OCI-LY7 (cell line): ENCODE measurements at regions of chr15 and their contacts with region 1.

Region 1: DNA sequence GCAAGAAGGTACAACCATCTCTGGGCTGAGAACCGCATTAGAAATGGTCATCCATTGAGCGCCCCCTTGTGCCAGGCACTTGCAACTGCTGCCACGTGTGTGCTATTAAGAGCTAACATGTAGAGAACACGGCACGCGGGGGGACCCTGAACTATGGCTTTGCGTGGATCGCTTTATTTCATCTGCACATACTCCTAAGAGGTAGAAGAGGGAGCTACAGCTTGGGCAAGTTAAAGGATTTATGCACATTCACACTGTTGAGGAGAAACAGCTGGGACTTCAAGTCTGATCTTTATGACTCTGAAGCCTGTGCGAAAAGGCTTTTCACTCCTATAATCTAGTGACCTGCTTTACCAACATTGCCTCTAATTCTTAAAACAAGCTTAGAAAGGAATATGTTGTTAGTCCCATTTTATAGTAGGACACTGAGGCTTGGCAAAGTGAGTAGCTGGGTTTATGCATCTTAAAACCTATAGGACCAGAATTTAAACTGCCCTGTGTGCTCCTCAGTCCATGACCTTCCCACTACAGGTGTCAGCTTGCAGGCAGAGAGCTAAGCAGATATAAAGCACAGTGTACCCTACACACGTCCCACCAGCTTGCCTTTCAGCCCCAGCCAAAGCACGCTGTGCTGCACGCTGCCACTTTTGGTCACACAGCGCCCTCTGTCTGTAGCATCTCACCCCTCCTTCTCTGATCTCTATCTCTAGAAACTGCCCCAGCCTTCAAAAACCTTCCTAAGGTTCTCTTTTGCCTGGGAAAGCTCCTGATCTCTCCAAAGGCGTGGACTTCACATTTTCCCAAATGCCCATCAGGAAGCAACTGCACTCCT is 57.8 kb downstream of the STARD5 start:
- DNase-seq: peak; percentile 89
- H3K4me3 ChIP-seq: peak overlapping the region; percentile 27
- H3K27ac ChIP-seq: peak overlapping the region; percentile 37
- H3K4me1 ChIP-seq: peaks cover 21% of the 10 kb centered on the region
- CTCF ChIP-seq: peak; percentile 89

Region 2: GRCh38 chr15:80455668-80456442 is 810.3 kb before region 1 on chr15:
- CTCF ChIA-PET with region 1: interaction called, 3 read pairs
- POLR2A ChIA-PET with region 1: no interaction called
- intact Hi-C with region 1: loop called (anchors 5 kb)
- DNase-seq: peak; percentile 61
- H3K4me3 ChIP-seq: no peak overlapping the region
- H3K27ac ChIP-seq: no peak overlapping the region
- H3K4me1 ChIP-seq: no peaks in the 10 kb centered on the region
- CTCF ChIP-seq: peak; percentile 95

Region 3: DNA sequence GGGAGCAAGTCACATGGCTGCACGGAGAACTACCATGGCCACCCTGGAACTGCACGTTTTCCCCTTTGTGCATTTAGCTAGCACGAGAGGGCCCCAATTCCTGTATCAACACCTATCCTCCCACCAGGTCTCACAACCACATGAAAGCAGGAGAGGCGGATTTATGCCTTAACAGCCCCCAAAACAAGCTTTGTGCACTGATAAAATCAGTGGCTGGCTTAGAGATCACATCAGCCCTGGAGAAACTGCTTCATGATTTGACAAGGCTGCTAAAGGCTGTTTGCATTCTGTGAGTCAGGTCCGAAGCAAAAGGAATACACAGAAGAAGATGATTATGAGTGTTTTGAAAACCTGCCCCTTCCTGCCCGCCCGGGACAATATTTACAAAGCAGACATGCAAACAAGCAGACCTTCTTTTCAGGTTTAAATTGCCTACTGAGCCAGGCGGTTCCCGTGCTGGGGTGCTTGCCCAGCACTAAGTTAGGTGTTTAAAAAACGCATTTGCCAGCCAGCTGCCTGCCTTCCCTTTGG is 461.1 kb before region 1 on chr15:
- CTCF ChIA-PET with region 1: no interaction called
- POLR2A ChIA-PET with region 1: no interaction called
- intact Hi-C with region 1: no loop called
- DNase-seq: no peak
- H3K4me3 ChIP-seq: no peak overlapping the region
- H3K27ac ChIP-seq: no peak overlapping the region
- H3K4me1 ChIP-seq: no peaks in the 10 kb centered on the region
- CTCF ChIP-seq: no peak

Region 4: GRCh38 chr15:80977627-80978036 is 288.5 kb before region 1 on chr15:
- CTCF ChIA-PET with region 1: interaction called, 10 read pairs
- POLR2A ChIA-PET with region 1: interaction called, 5 read pairs
- intact Hi-C with region 1: loop called (anchors 2 kb)
- DNase-seq: peak; percentile 72
- H3K4me3 ChIP-seq: no peak overlapping the region
- H3K27ac ChIP-seq: no peak overlapping the region
- H3K4me1 ChIP-seq: peaks cover 29% of the 10 kb centered on the region
- CTCF ChIP-seq: peak; percentile 89

Region 5: DNA sequence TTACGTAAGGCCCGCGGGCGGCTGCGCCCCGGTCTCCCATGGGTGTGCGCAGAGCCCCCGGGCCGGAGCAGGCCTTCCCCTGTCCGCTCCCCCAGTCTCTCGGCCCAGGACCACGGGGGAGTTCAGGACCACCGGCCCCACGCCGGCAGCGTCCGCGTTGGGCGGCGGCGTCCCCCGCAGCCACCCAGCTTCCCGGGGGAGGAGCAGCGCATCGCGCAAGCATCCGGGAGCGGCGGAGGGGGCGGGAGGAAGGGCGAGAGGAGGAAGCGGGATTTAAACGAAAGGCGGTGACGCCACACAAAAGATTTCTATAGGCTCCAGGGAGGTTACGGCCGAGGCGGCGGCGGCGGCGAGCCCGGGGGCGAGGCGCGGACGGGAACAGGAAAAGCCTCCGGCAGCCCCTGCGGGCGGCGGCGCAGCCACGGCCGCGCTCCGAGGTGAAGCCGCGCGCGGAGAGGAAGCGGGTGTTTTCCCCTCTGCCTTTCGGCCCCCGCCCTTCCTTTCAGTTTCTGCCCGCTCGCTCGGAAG is 265.5 kb before region 1 on chr15 and contains the start of gene TLNRD1:
- CTCF ChIA-PET with region 1: no interaction called
- POLR2A ChIA-PET with region 1: no interaction called
- intact Hi-C with region 1: loop called (anchors 5 kb)
- DNase-seq: peak; percentile 86
- H3K4me3 ChIP-seq: peak within 1 kb of the TSS; percentile 77
- H3K27ac ChIP-seq: peak within 1 kb of the TSS; percentile 65
- H3K4me1 ChIP-seq: peaks cover 31% of the 10 kb centered on the region
- CTCF ChIP-seq: no peak
- total RNA-seq, gene TLNRD1: 17.0 and 19.9 TPM in 2 replicates

Region 6: GRCh38 chr15:81106560-81106959 is 159.6 kb before region 1 on chr15:
- CTCF ChIA-PET with region 1: interaction called, 8 read pairs
- POLR2A ChIA-PET with region 1: interaction called, 4 read pairs
- intact Hi-C with region 1: loop called (anchors 1 kb)
- DNase-seq: peak; percentile 54
- H3K4me3 ChIP-seq: no peak overlapping the region
- H3K27ac ChIP-seq: no peak overlapping the region
- H3K4me1 ChIP-seq: no peaks in the 10 kb centered on the region
- CTCF ChIP-seq: peak; percentile 85

Region 7: GRCh38 chr15:81155375-81156218 is 110.6 kb before region 1 on chr15:
- CTCF ChIA-PET with region 1: interaction called, 58 read pairs
- POLR2A ChIA-PET with region 1: interaction called, 3 read pairs
- intact Hi-C with region 1: loop called (anchors 1 kb)
- DNase-seq: peak; percentile 62
- H3K4me3 ChIP-seq: no peak overlapping the region
- H3K27ac ChIP-seq: no peak overlapping the region
- H3K4me1 ChIP-seq: no peaks in the 10 kb centered on the region
- CTCF ChIP-seq: peak; percentile 81

Region 8: DNA sequence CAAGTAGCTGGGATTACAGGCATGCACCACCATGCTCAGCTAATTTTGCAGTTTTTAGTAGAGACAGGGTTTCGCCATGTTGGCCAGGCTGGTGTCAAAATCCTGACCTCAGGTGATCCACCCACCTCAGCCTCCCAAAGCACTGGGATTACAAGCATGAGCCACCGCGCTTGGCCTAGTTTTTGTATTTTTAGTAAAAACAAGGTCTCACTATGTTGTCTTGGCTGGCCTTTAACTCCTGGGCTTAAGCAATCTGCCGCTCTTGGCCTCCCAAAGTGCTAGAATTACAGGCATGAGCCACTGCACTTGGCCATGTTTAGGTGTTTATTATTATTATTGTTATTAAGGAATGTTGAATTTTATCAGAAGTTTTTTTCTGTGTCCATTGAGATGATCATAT is 54.8 kb before region 1 on chr15:
- CTCF ChIA-PET with region 1: no interaction called
- POLR2A ChIA-PET with region 1: no interaction called
- intact Hi-C with region 1: no loop called
- DNase-seq: no peak
- H3K4me3 ChIP-seq: no peak overlapping the region
- H3K27ac ChIP-seq: no peak overlapping the region
- H3K4me1 ChIP-seq: no peaks in the 10 kb centered on the region
- CTCF ChIP-seq: no peak

Region 9: DNA sequence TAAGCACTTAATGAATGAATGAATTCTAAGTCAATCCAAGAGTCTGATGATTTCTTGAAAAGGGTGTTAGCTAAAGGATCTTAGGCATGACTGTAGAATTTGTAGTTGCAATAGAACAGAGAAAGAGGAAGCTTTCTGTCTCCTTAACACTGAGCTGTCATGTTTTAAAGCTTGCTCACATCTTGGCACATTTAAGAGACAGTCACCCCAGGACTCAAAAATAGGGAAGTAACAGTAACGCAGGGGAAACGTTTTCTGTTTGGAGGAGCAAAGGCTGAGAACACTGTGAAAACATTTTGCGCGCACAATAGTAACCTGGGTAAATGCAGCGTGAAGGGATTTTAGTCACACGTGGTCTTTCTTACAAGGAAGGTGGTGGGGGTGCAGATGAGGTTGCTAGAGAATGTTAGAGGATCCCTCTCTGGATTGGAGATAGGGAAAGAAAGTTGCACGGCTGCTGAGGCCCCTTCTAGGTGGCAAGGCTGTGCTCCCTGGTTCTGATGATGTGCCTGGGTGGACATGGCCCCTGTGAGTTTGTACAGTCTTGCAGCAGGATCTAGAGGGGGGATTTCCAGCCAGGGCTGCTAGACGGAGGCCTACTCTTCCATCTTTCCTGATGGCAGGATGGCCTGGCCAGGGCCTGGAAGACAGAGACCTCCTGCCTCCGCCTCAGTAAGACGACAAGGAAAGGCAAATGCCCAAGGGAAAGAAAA is 45.7 kb after region 1 on chr15:
- CTCF ChIA-PET with region 1: no interaction called
- POLR2A ChIA-PET with region 1: no interaction called
- intact Hi-C with region 1: no loop called
- DNase-seq: peak; percentile 60
- H3K4me3 ChIP-seq: no peak overlapping the region
- H3K27ac ChIP-seq: peak overlapping the region; percentile 41
- H3K4me1 ChIP-seq: peaks cover 52% of the 10 kb centered on the region
- CTCF ChIP-seq: no peak